Panc1 (cell line): ENCODE measurements at regions of chr19 and their contacts with region 1.

Region 1: GRCh38 chr19:31838163-31838815 is 489.1 kb upstream of the TSHZ3 start:
- DNase-seq: no peak
- ATAC-seq: no peak
- H3K4me3 ChIP-seq: no peak overlapping the region
- H3K27ac ChIP-seq: no peak overlapping the region
- H3K4me1 ChIP-seq: no peaks in the 10 kb centered on the region
- H3K27me3 ChIP-seq: no peaks in the 10 kb centered on the region
- CTCF ChIP-seq: no peak

Region 2: DNA sequence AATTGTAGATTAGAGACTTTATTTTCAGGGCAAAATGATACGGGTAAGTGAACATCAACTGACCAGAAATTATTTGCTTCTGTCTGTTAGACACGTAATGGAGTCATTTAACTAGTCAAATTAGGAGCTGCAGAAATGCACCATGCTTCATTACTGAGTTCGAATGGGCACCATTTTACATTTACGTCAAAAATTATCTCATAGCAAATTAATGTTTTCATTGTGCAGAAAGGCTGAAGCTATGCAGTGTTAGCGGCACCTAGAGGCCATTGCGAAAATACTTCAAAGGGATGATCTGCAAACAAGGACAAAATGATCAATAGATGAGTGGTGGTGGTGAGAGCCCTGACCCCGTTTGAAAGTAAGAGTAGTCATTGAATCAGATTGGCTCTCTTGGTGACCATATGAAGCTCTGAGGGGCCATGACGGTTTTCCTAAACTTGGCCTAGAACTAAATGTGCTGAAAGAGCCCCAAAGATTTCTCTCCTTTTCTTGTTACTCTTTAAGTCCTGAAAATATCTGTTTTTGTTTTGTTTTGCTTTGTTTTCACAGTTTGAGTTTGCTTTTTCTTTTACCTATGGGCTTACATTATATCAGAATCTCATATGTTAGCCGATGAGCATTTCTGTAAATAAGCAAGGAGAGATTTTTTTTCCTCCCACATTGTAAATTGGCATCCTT is 1188.2 kb before region 1 on chr19:
- CTCF ChIA-PET with region 1: no interaction called
- POLR2A ChIA-PET with region 1: no interaction called
- in situ Hi-C with region 1: no loop called
- intact Hi-C with region 1: no loop called
- DNase-seq: peak; percentile 38
- ATAC-seq: peak; percentile 80; the same call in 1 of the 2 replicates
- H3K4me3 ChIP-seq: no peak overlapping the region
- H3K27ac ChIP-seq: no peak overlapping the region
- H3K4me1 ChIP-seq: no peaks in the 10 kb centered on the region
- H3K27me3 ChIP-seq: peaks cover 49% of the 10 kb centered on the region
- CTCF ChIP-seq: peak; percentile 94

Region 3: GRCh38 chr19:31378404-31378803 is 459.9 kb before region 1 on chr19:
- CTCF ChIA-PET with region 1: no interaction called
- POLR2A ChIA-PET with region 1: no interaction called
- in situ Hi-C with region 1: no loop called
- intact Hi-C with region 1: no loop called
- DNase-seq: peak; percentile 28
- ATAC-seq: peak; percentile 88
- H3K4me3 ChIP-seq: no peak overlapping the region
- H3K27ac ChIP-seq: no peak overlapping the region
- H3K4me1 ChIP-seq: peaks cover 6% of the 10 kb centered on the region; the same call in 1 of the 2 replicates
- H3K27me3 ChIP-seq: no peaks in the 10 kb centered on the region
- CTCF ChIP-seq: no peak

Region 4: GRCh38 chr19:31733591-31733990 is 104.7 kb before region 1 on chr19:
- CTCF ChIA-PET with region 1: no interaction called
- POLR2A ChIA-PET with region 1: no interaction called
- in situ Hi-C with region 1: no loop called
- intact Hi-C with region 1: no loop called
- DNase-seq: no peak
- ATAC-seq: no peak
- H3K4me3 ChIP-seq: no peak overlapping the region
- H3K27ac ChIP-seq: no peak overlapping the region
- H3K4me1 ChIP-seq: no peaks in the 10 kb centered on the region
- H3K27me3 ChIP-seq: peaks cover 2% of the 10 kb centered on the region; the same call in 1 of the 2 replicates
- CTCF ChIP-seq: no peak

Region 5: DNA sequence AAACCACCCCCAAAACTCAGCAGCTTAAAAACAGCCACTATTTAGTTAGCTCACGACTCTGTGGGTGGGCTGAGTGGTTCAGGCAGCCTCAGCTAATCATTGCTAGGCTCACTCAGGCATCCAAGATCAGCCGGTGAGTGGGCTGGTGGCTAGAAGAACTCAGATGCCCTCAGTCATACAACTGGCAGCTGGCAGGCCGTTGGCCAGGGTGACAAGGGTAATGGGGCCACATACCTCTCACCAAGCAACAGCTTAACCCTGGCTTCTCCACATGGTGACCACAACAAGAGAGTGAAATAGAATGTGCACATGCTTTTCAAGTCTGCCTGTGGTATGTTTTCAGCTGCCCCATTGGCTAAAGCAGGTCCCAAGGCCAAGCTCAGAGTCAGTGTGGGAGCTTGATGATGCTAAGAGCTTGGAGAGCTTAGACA is 53.6 kb before region 1 on chr19:
- CTCF ChIA-PET with region 1: no interaction called
- POLR2A ChIA-PET with region 1: no interaction called
- in situ Hi-C with region 1: no loop called
- intact Hi-C with region 1: no loop called
- DNase-seq: no peak
- ATAC-seq: no peak
- H3K4me3 ChIP-seq: no peak overlapping the region
- H3K27ac ChIP-seq: no peak overlapping the region
- H3K4me1 ChIP-seq: no peaks in the 10 kb centered on the region
- H3K27me3 ChIP-seq: peaks cover 2% of the 10 kb centered on the region; the same call in 1 of the 2 replicates
- CTCF ChIP-seq: no peak

Region 6: DNA sequence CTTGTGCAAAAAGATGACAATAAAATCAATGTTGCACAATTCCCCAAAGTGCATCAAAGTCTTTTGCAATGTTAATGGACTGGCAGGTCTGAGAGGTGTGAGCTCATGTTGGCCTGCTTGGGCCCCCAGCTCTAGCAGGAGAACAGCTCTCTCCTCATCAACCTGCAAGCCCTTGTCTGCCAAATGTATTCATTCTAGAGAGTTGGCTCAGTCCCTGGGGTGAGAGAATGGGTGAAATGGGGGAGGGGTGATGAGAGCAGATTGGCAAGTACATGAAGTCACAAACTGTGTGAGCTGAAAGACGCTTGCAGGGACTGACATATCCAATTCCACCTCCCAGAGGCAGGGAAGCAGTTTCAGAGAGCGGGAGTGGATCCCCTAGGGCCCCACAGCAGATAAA is 42.0 kb after region 1 on chr19:
- CTCF ChIA-PET with region 1: interaction called, 10 read pairs
- POLR2A ChIA-PET with region 1: no interaction called
- in situ Hi-C with region 1: no loop called
- intact Hi-C with region 1: no loop called
- DNase-seq: no peak
- ATAC-seq: no peak
- H3K4me3 ChIP-seq: no peak overlapping the region
- H3K27ac ChIP-seq: no peak overlapping the region
- H3K4me1 ChIP-seq: no peaks in the 10 kb centered on the region
- H3K27me3 ChIP-seq: peaks cover 6% of the 10 kb centered on the region; the same call in 1 of the 2 replicates
- CTCF ChIP-seq: no peak